ENCODE measurements at regions of chr2 and their contacts with region 1.

Region 1: DNA sequence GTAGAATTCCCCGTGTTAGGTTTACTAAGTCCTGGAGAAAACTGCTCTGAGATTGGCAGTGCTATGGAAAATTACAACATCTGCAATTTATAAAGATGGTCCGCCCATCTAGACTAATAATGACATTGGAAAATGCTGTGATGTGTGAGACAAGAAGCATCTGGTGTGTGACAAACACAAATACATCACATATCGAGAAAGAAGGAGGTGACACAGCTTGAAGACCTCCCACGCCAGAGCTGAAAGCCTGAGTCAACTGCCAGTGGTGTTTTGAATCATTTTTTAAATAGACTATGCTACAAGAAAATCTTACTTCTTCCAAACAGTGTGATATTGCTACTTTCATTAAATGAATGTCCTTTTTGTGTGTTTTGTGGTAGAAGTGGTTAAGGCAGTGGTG is 8.6 kb upstream of the ANO7 start:
- DNase-seq: no peak
- ATAC-seq: no peak
- H3K4me3 Mint-ChIP-seq: no peak overlapping the region
- H3K27ac Mint-ChIP-seq: peak overlapping the region; percentile 40; the same call in 1 of the 2 replicates
- H3K4me1 Mint-ChIP-seq: 0 out of 2 replicates have a peak, but pooled peaks cover 5% of the 10 kb centered on the region
- H3K27me3 Mint-ChIP-seq: no peaks in the 10 kb centered on the region
- CTCF ChIP-seq: no peak

Region 2: DNA sequence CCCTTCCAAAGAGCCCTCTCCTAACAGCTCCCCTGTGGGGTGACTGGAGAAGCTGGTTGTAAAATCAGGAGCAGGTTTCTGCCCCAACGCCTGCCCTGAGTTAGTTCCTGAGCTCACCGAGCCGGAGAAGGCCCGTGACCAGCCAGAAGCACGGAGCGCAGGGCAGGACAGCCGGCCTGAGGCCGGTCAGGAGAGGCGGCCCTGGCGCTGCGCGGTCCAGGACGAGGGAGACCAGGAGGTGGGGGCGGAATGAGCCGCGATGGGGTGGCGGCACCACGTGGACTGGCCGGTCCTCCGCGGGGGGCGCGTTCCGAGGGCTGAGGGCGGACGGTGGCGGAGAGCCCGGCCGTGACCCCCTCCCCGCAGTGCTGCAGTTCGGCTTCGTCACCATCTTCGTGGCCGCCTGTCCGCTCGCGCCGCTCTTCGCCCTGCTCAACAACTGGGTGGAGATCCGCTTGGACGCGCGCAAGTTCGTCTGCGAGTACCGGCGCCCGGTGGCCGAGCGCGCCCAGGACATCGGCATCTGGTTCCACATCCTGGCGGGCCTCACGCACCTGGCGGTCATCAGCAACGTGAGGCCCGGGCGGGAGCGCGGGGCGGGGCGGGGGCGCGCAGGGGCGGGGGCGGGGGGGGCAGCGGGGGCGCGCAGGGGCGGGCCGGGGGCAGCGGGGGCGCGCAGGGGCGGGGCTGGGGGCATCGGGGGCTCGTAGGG is 37.6 kb after region 1 on chr2:
- CTCF ChIA-PET with region 1: interaction called, 12 read pairs
- POLR2A ChIA-PET with region 1: no interaction called
- DNase-seq: peak; percentile 74
- ATAC-seq: peak; percentile 72
- H3K4me3 Mint-ChIP-seq: peak overlapping the region; percentile 78
- H3K27ac Mint-ChIP-seq: peak overlapping the region; percentile 96
- H3K4me1 Mint-ChIP-seq: peaks cover 25% of the 10 kb centered on the region
- H3K27me3 Mint-ChIP-seq: peaks cover 5% of the 10 kb centered on the region
- CTCF ChIP-seq: no peak

Region 3: GRCh38 chr2:241271641-241272297 is 91.9 kb after region 1 on chr2:
- CTCF ChIA-PET with region 1: no interaction called
- POLR2A ChIA-PET with region 1: no interaction called
- DNase-seq: peak; percentile 28
- ATAC-seq: peak; percentile 13
- H3K4me3 Mint-ChIP-seq: peak overlapping the region; percentile 78
- H3K27ac Mint-ChIP-seq: peak overlapping the region; percentile 32; the same call in 1 of the 2 replicates
- H3K4me1 Mint-ChIP-seq: peaks cover 33% of the 10 kb centered on the region
- H3K27me3 Mint-ChIP-seq: no peaks in the 10 kb centered on the region
- CTCF ChIP-seq: no peak